Ascending aorta (tissue), 2 donors: ENCODE measurements at regions of chr5 and their contacts with region 1.

Region 1: DNA sequence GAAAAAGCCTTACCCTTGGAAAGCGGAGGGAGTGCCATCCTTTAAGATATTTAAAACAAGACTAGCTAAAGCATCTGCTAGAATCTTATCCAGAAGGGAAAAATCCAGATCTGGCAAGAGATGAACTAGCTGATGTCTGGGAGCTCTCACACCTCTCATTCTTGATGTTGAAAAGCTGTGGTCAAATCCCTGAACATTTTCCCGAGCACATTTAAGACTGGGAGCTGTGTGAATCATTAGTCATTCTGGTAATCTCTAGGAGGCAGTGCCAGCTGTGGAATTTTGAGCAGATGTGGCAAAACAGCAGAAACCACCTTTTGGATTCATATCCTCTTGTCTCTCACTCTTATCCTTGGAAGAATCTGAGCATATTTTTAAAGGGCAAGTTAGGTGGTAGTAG is 218.0 kb downstream of the MAN2A1 start:
- DNase-seq: no peak
- H3K4me3 ChIP-seq: no peak overlapping the region
- H3K27ac ChIP-seq: no peak overlapping the region
- H3K4me1 ChIP-seq: no peaks in the 10 kb centered on the region
- H3K27me3 ChIP-seq: no peaks in the 10 kb centered on the region
- CTCF ChIP-seq: peak in 1 of 3 experiments; percentile 11

Region 2: DNA sequence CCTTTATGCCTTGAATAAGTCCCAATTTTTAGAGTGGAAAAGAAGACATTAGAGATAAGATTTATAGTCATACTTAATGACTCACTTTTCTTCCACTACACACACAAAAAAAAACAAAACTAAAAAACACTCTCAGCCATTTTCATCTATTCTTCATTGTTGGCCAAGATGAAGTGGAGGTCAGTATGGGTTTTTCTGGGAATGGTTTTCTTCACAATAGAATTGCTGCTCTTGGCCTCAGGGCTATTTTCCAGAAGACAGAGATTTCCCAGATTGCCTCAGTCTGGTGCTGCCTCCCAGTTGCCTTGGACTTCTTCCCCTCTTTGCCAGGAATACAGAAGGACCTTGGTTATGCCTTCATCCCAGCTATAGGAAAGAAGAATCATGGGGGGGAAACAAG is 355.0 kb after region 1 on chr5:
- intact Hi-C with region 1: loop called (anchors 10 kb)
- DNase-seq: no peak
- H3K4me3 ChIP-seq: no peak overlapping the region
- H3K27ac ChIP-seq: peak overlapping the region; percentile 35 to 73
- H3K4me1 ChIP-seq: peaks cover 0 to 18% of the 10 kb centered on the region in 2 donors
- H3K27me3 ChIP-seq: no peaks in the 10 kb centered on the region
- CTCF ChIP-seq: no peak